A673 (cell line): ENCODE measurements at regions of chr4 and their contacts with region 1.

Region 1: GRCh38 chr4:7802093-7802726 is 137.5 kb downstream of the AFAP1 start:
- DNase-seq: peak; percentile 85
- H3K4me3 ChIP-seq: no peak overlapping the region
- H3K27ac ChIP-seq: no peak overlapping the region
- H3K4me1 ChIP-seq: peaks cover 26% of the 10 kb centered on the region
- H3K27me3 ChIP-seq: no peaks in the 10 kb centered on the region
- CTCF ChIP-seq: peak; percentile 92

Region 2: DNA sequence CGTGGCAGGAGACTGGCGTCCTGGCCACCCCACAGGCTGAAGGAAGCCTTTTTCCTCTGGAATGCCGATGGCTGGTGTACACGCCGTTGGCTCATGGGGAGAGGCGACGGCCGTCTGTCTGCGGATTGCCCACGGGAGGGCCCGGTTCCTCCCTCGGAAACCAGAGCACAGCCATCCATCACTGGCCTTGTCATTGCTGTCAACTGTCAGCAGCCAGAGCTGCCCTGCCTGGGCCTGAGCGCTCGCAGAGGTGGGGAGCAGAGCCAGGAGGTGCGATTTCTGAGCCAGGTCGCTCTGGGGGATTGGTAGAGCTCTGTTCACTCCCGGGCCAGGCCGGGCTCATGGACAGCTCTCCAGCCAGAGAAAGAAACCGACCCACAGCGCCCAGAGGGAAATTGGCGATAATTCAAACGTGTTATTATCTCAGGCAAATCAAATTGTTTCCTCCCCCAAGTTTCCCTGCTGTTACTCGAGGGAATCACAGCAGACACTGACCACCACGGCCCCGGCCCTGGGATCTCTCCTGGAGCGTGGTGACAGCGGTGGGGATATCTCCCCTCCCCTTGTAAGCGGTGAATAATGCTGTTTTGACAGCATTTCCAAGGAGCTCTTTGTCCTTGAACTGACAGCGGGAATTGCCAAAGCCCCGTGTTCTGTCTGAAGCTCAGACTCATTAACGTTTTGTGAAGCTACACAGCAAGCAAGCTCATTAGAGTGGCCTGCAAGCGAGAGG is 146.5 kb before region 1 on chr4:
- CTCF ChIA-PET with region 1: interaction called, 3 read pairs
- POLR2A ChIA-PET with region 1: interaction called, 10 read pairs
- intact Hi-C with region 1: no loop called
- DNase-seq: peak; percentile 67
- H3K4me3 ChIP-seq: no peak overlapping the region
- H3K27ac ChIP-seq: no peak overlapping the region
- H3K4me1 ChIP-seq: no peaks in the 10 kb centered on the region
- H3K27me3 ChIP-seq: no peaks in the 10 kb centered on the region
- CTCF ChIP-seq: no peak

Region 3: DNA sequence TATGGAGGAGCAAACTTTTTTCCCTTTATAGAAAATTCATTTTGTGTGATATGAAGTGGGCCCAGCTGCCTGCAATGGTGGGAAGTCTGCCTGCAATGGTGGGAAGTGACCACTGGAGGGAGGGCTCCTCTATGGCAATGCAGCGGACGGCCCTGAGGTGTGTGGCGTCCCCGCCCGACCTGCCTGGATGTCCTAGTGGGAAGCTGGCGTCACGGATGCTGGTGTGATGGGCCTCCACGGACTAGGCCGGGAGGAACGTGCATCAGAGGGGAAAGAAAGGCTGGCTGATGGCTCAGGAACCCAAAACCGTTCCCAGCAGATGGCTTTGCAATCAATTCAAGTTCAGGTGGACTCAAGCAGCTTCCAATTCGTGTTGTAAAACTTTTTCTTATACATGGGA is 40.5 kb before region 1 on chr4:
- CTCF ChIA-PET with region 1: interaction called, 34 read pairs
- POLR2A ChIA-PET with region 1: no interaction called
- intact Hi-C with region 1: loop called (anchors 1 kb)
- DNase-seq: peak; percentile 86
- H3K4me3 ChIP-seq: no peak overlapping the region
- H3K27ac ChIP-seq: peak overlapping the region; percentile 14
- H3K4me1 ChIP-seq: peaks cover 36% of the 10 kb centered on the region
- H3K27me3 ChIP-seq: no peaks in the 10 kb centered on the region
- CTCF ChIP-seq: peak; percentile 82

Region 4: GRCh38 chr4:7770224-7771050 is 31.8 kb before region 1 on chr4:
- CTCF ChIA-PET with region 1: interaction called, 19 read pairs
- POLR2A ChIA-PET with region 1: no interaction called
- intact Hi-C with region 1: loop called (anchors 2 kb)
- DNase-seq: peak; percentile 51
- H3K4me3 ChIP-seq: no peak overlapping the region
- H3K27ac ChIP-seq: no peak overlapping the region
- H3K4me1 ChIP-seq: peaks cover 10% of the 10 kb centered on the region
- H3K27me3 ChIP-seq: no peaks in the 10 kb centered on the region
- CTCF ChIP-seq: peak; percentile 67

Region 5: GRCh38 chr4:7843831-7844593 is 41.8 kb after region 1 on chr4:
- CTCF ChIA-PET with region 1: interaction called, 13 read pairs
- POLR2A ChIA-PET with region 1: no interaction called
- intact Hi-C with region 1: loop called (anchors 2 kb)
- DNase-seq: peak; percentile 82
- H3K4me3 ChIP-seq: no peak overlapping the region
- H3K27ac ChIP-seq: peak overlapping the region; percentile 21
- H3K4me1 ChIP-seq: peaks cover 5% of the 10 kb centered on the region
- H3K27me3 ChIP-seq: no peaks in the 10 kb centered on the region
- CTCF ChIP-seq: peak; percentile 82

Region 6: DNA sequence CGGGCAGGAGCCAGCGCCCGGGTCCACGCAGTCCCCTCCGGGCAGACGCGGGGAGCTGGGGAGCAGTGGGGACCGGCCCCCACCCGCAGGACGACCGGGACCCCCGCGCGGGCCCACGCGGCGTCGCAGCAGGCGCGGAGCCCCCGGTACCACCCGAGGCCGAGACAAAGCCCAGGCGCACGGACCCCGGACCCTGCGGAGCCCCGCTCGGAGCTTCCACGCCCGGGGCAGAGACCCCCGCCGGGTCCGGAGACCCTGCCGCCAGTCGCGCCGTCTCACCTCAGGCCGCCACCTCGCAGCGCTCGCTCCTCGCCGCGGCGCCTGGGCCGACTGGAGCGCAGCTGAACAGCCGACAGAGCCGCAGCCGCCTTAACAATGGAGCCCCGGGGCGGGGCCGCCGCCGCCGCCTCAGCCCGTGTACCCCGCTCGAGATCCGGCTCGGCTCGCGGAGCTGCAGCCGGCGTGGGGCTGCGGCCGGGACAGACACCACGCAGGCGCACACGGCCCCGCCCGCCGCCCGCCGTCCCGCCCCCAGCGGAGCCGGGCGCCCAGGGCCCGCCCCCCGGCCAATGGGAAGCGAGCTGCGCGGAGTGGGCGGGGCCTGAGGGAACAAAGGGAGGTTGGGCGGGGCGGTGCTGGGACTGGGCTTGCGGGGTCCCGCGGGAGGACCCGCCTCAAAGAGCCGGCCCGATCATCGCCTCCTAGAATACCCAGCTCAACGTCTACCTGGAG is 137.3 kb after region 1 on chr4 and contains the start of gene AFAP1:
- CTCF ChIA-PET with region 1: interaction called, 10 read pairs
- POLR2A ChIA-PET with region 1: no interaction called
- intact Hi-C with region 1: no loop called
- DNase-seq: peak; percentile 95
- H3K4me3 ChIP-seq: peak within 1 kb of the TSS; percentile 97
- H3K27ac ChIP-seq: peak within 1 kb of the TSS; percentile 90
- H3K4me1 ChIP-seq: peaks cover 15% of the 10 kb centered on the region
- H3K27me3 ChIP-seq: no peaks in the 10 kb centered on the region
- CTCF ChIP-seq: no peak
- total RNA-seq, gene AFAP1: 42.6 and 42.9 TPM in 2 replicates

Region 7: DNA sequence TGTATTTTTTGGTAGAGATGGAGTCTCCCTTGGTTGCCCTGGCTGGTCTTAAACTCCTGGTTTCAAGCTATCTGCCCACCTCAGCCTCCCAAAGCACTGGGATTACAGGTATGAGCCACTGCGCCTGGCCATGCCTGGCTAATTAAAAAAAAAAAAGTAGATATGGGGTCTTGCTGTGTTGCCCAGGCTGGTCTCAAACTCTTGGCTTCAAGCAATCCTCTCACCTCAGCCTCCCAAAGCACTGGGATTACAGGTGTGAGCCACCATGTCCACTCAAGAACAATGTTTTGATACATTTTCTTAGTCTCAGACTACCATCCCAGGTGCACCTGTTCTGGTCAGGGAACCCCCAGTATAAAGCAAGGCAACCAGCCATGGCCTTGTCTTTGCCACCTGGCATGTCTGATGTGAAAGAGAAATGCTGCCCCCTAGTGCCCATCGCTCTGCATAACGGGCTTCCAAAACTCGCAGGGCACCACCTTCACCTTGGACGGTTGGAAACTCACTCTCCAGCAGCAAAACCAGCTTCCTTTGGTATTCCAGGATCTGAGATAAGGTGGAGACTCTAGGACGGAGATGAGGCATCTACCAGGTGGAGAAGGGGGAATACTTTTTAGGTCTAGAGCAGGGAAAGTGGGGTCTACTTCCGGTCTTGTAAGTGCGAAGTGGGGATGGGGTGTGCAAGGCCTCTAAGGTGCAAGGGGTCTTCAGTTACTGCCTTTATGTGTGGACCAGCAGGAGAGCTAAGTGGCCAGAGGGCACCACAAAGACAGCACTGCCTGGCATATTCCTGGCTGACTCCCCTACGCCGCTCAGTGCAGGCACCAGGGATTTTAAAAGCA is 185.2 kb after region 1 on chr4:
- CTCF ChIA-PET with region 1: interaction called, 11 read pairs
- POLR2A ChIA-PET with region 1: no interaction called
- intact Hi-C with region 1: loop called (anchors 1 kb)
- DNase-seq: peak; percentile 82
- H3K4me3 ChIP-seq: no peak overlapping the region
- H3K27ac ChIP-seq: no peak overlapping the region
- H3K4me1 ChIP-seq: no peaks in the 10 kb centered on the region
- H3K27me3 ChIP-seq: no peaks in the 10 kb centered on the region
- CTCF ChIP-seq: peak; percentile 90